ENCODE measurements at regions of chr1 and their contacts with region 1.

Region 1: GRCh38 chr1:172638885-172639831 is 19.7 kb upstream of the FASLG start:
- DNase-seq: peak; percentile 93
- H3K4me3 Mint-ChIP-seq: peak overlapping the region; percentile 53
- H3K27ac Mint-ChIP-seq: peak overlapping the region; percentile 98
- H3K4me1 Mint-ChIP-seq: peaks cover 71% of the 10 kb centered on the region
- H3K27me3 Mint-ChIP-seq: peaks cover 20% of the 10 kb centered on the region

Region 2: GRCh38 chr1:172357753-172358385 is 281.3 kb before region 1 on chr1:
- CTCF ChIA-PET with region 1: no interaction called
- POLR2A ChIA-PET with region 1: no interaction called
- intact Hi-C with region 1: loop called (anchors 2 kb)
- DNase-seq: no peak
- H3K4me3 Mint-ChIP-seq: peak overlapping the region; percentile 11
- H3K27ac Mint-ChIP-seq: peak overlapping the region; percentile 85
- H3K4me1 Mint-ChIP-seq: peaks cover 66% of the 10 kb centered on the region
- H3K27me3 Mint-ChIP-seq: no peaks in the 10 kb centered on the region

Region 3: GRCh38 chr1:172487550-172487949 is 151.6 kb before region 1 on chr1:
- CTCF ChIA-PET with region 1: no interaction called
- POLR2A ChIA-PET with region 1: no interaction called
- intact Hi-C with region 1: no loop called
- DNase-seq: no peak
- H3K4me3 Mint-ChIP-seq: no peak overlapping the region
- H3K27ac Mint-ChIP-seq: no peak overlapping the region
- H3K4me1 Mint-ChIP-seq: peaks cover 8% of the 10 kb centered on the region
- H3K27me3 Mint-ChIP-seq: no peaks in the 10 kb centered on the region

Region 4: DNA sequence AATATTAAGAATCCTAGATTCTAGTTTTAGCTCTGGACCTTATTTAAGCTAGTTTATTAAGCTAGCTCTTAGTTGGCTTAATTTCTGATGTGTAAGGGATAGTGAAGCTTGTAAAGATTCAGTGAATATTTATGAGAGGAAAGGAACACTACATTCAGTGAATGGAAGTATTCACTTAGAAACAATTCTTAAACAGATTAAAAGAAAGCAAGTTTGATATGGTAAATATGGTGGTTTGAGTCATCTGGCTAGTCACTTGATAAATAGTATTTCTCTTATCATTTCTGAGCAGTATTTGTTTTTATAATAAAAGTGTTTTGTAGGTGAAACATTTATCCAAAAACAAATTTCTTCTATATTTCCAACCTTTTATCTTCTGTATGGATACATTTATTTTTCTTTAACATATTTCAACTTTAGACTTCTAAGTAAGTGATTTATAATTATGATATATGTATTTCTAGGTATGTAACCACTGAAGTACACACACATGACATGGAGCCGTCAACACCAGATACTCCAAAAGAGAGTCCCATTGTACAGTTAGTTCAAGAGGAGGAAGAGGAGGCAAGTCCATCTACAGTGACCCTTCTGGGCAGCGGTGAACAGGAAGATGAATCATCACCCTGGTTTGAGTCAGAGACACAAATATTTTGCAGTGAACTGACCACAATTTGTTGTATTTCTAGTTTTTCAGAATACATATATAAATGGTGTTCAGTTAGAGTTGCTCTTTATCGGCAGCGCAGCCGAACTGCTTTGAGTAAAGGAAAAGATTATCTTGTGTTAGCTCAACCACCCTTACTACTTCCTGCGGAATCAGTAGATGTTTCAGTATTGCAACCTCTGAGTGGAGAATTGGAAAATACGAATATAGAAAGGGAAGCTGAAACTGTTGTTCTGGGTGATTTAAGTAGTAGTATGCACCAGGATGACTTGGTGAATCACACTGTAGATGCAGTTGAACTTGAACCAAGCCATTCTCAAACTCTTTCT is 50.6 kb before region 1 on chr1:
- CTCF ChIA-PET with region 1: interaction called, 7 read pairs
- POLR2A ChIA-PET with region 1: no interaction called
- intact Hi-C with region 1: loop called (anchors 1 kb)
- DNase-seq: peak; percentile 43
- H3K4me3 Mint-ChIP-seq: no peak overlapping the region
- H3K27ac Mint-ChIP-seq: peak overlapping the region; percentile 49
- H3K4me1 Mint-ChIP-seq: peaks cover 28% of the 10 kb centered on the region
- H3K27me3 Mint-ChIP-seq: no peaks in the 10 kb centered on the region

Region 5: GRCh38 chr1:172671591-172671990 is 32.4 kb after region 1 on chr1:
- CTCF ChIA-PET with region 1: no interaction called
- POLR2A ChIA-PET with region 1: interaction called, 18 read pairs
- intact Hi-C with region 1: loop called (anchors 1 kb)
- DNase-seq: no peak
- H3K4me3 Mint-ChIP-seq: no peak overlapping the region
- H3K27ac Mint-ChIP-seq: no peak overlapping the region
- H3K4me1 Mint-ChIP-seq: peaks cover 77% of the 10 kb centered on the region
- H3K27me3 Mint-ChIP-seq: no peaks in the 10 kb centered on the region

Region 6: GRCh38 chr1:172719694-172720138 is 80.6 kb after region 1 on chr1:
- CTCF ChIA-PET with region 1: interaction called, 78 read pairs
- POLR2A ChIA-PET with region 1: interaction called, 4 read pairs
- intact Hi-C with region 1: loop called (anchors 1 kb)
- DNase-seq: no peak
- H3K4me3 Mint-ChIP-seq: no peak overlapping the region
- H3K27ac Mint-ChIP-seq: no peak overlapping the region
- H3K4me1 Mint-ChIP-seq: peaks cover 41% of the 10 kb centered on the region
- H3K27me3 Mint-ChIP-seq: no peaks in the 10 kb centered on the region

Measured in activated CD4-positive, alpha-beta memory T cell treated with anti-CD3 and anti-CD28 coated beads for 36 hours (primary cell).